GM13977 (cell line): ENCODE measurements at regions of chr20 and their contacts with region 1.

Region 1: DNA sequence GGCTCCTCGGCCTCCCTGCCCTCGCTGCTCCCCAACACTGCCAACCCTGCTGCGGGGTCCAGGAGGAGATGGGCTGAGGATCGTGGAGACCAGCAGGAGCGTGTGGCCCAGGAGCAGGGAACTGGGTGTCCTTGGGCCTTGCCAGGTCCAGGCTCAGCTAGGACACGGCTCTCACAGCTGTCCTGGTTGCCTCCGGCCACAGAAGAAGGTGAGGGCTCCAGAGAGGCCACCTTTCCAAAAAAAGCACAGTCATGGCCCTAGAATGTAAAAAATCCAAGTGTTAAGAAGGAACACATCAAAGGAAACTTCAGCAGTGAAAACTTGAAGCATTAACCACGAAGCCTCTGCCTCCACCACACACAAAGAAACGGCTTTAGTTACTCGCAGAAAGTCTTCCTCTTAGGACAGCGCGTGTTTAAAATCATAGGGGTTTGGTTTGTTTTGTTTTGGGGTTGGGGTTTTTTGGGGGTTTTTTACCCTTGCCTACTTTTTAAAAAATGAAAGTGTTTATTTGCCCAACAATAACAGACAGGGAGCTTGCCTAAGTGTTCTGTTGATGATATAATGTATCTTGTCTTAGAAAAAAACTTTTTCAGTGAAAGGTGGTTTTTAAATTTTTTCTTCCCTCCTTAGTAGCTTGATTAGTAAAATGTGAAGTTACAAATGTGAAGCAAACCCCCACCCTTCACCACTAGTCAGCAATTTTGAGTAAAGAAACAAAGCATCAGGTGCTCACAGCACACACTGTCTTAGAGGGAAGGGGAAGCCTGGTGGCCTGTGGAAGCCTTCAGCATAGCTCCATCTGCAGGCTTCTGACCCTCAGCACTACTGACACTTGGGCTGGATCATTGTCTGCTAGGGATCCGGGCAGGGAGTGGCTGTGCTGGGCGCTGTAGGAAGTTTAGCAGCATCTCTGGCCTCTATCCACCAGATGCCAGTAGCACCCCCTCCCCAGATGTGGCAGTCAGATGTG is 60.0 kb downstream of the PTPN1 start:
- DNase-seq: peak; percentile 78
- CTCF ChIP-seq: peak; percentile 76

Region 2: GRCh38 chr20:50471204-50471610 is 98.9 kb before region 1 on chr20:
- in situ Hi-C with region 1: loop called (anchors 5 kb)
- DNase-seq: no peak
- CTCF ChIP-seq: no peak

Region 3: DNA sequence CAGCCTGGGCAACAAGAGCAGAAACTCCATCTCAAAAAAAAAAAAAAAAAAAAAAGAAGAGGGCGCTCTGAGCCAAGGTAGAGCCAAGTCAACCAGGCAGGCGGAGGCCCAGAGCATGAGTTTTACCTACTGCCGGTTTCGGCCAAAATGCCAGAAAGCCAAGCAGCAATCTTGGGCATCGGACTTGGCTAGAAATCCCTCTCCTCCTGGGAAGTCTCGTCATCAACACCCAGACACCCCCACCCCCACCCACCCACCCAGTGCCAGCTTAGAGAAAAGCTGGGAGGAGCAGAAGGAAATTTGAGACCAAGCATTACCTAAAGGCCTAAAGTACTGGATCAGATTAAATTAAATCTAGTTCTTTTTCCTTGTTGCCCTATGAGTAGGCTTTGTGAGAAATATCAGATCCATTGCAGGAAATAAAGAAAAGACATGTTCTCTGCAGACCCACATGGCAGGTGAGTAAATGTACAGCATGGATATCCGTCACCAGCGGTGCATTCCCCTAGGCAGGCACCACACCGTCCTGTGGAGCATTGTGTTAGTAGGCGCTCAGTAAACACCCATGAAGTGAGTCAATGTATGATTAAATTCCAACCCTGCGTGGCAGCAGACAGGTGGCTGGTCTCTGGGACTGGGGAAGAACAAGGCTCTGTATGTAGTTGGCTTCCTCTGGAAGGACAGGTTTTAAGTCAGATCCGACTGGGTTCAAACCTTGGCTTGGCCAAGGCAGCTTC is 100.1 kb after region 1 on chr20:
- in situ Hi-C with region 1: no loop called
- DNase-seq: no peak
- CTCF ChIP-seq: no peak